ENCODE measurements at regions of chr10 and their contacts with region 1.

Region 1: GRCh38 chr10:69408318-69409175 is 8.2 kb downstream of the TACR2 start:
- DNase-seq: peak; percentile 79 to 96 (median 89)
- H3K4me3 ChIP-seq: peak overlapping the region; percentile 39 to 73 (median 59)
- H3K27ac ChIP-seq: peak overlapping the region in 58 of 59 donors; percentile 55 to 97 (median 84)
- H3K27me3 ChIP-seq: no peaks in the 10 kb centered on the region
- CTCF ChIP-seq: peak; percentile 29 to 93 (median 80)

Region 2: DNA sequence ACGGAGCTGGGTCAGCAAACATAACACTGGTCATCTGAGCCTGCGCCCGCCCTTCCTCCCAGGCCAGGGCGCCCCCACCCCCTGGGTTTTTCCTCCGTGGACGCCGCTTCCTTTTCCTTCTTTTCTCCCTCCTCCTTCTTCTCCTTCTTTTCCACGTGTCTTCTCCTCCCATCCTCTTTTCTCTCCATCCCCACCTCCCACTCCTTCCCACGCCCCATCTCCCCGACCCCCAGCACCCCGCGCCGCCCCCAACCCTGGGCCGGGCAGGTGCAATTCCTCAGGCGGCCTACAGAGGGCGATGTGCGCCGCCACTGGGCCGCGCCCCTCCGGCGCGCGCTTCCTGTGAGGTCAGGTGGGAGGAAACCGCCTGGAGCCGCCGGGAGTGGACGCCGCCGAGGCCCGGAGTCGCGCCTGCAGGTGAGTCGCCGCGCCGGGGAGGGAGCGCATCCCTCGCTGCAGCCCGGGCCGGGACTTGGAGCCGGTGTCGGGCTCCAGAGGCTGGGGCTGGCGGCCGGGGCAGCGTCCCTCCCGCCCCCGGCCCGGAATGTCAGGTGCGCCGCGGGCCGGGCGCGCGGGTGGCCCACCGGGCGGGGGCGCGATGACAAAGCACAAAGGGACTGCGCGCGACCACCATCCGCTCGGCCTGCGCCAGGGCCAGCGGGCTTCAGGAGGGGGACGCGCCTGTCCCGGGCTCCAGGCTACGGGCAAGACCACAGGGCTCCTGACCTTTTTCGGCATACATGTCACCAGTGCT is 221.5 kb after region 1 on chr10 and contains the start of gene FAM241B:
- intact Hi-C with region 1: loop called in 1 of 2 experiments (anchors 5 kb)
- DNase-seq: peak in 7 of 10 donors; percentile 47 to 85 (median 64)
- H3K4me3 ChIP-seq: peak within 1 kb of the TSS; percentile 40 to 86 (median 69)
- H3K27ac ChIP-seq: peak within 1 kb of the TSS in 47 of 59 donors; percentile 5 to 85 (median 66)
- H3K27me3 ChIP-seq: no peaks in the 10 kb centered on the region
- CTCF ChIP-seq: peak; percentile 77 to 99 (median 94)
- total RNA-seq, gene FAM241B: 13.4 to 54.2 (median 37.1) TPM

Measured in dorsolateral prefrontal cortex (tissue), 120 donors.